Thyroid gland (tissue), 4 donors: ENCODE measurements at regions of chr2 and their contacts with region 1.

Region 1: DNA sequence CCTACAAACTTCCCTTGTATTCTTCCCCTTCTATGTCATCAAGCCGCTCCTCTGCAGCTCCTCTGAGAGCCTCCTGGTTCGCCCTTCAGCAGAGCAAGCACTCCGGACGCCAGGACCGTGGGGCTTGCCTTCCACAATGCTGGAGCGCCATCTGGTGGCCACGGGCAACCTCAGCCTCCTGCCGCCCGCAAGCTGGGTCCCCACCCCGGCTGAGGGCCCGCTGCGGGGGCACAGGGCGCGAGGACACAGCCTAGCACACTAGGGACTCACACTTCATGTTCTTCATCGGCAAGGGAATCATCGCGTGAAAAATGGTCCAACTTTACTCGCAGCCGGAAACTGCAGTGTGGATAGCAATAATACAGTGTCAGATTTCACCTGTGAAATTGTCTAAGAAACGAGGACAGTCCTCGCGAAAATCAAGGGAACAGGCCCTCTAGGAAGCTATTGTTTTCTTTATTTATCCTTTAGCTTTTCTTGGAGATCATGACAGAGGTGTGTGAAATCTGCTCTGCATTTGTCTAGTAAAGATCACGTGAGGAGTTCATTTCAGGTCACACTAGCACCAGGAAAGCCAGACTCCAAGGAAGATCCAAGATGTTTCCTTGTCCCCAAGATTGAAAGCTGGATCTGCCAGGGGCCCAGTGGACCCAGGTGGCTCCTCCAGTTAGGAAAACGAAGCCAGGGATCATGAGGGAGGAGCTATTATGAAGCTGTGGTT is 5.8 kb downstream of the PRLH start:
- DNase-seq: peak; percentile 89 to 94
- H3K4me3 ChIP-seq: no peak overlapping the region
- H3K27ac ChIP-seq: peak overlapping the region in 1 of 3 donors; percentile 54
- H3K4me1 ChIP-seq: peaks cover 5 to 15% of the 10 kb centered on the region in 2 donors
- H3K27me3 ChIP-seq: no peaks in the 10 kb centered on the region
- CTCF ChIP-seq: peak; percentile 94 to 99 (median 98)
- POLR2A ChIP-seq: peak in 1 of 2 donors; percentile 18

Region 2: DNA sequence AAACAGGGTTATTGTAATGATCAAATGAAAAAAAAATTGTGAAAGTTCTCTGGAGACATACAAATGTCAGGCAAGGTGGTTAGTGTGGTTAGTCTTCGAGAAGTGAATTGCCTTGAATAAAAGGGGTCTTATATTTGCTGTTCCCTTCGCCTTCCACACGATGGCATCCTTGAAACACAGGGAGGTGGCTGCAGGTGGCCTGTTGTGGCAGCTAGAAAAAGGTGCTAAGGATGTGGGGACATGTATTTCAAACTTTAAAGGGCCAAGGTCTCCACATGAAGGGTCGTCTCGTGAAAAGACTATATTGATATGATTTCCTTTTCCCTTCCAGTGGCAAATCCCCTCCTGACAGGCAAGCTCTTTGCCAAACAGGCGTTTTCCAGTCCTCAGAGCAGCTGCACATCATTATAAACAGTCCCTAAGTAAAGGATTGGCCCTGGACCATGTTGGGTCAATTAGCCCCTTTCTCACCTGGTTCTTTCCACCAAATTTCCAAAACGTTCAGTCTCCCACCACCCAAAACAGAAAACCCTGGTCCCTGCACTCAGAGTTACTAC is 418.0 kb before region 1 on chr2:
- intact Hi-C with region 1: loop called (anchors 10 kb)
- DNase-seq: peak; percentile 44 to 52
- H3K4me3 ChIP-seq: no peak overlapping the region
- H3K27ac ChIP-seq: no peak overlapping the region
- H3K4me1 ChIP-seq: peaks cover 0 to 7% of the 10 kb centered on the region in 2 donors
- H3K27me3 ChIP-seq: no peaks in the 10 kb centered on the region
- CTCF ChIP-seq: peak in 5 of 6 experiments; percentile 12 to 84 (median 66)
- POLR2A ChIP-seq: no peak

Region 3: DNA sequence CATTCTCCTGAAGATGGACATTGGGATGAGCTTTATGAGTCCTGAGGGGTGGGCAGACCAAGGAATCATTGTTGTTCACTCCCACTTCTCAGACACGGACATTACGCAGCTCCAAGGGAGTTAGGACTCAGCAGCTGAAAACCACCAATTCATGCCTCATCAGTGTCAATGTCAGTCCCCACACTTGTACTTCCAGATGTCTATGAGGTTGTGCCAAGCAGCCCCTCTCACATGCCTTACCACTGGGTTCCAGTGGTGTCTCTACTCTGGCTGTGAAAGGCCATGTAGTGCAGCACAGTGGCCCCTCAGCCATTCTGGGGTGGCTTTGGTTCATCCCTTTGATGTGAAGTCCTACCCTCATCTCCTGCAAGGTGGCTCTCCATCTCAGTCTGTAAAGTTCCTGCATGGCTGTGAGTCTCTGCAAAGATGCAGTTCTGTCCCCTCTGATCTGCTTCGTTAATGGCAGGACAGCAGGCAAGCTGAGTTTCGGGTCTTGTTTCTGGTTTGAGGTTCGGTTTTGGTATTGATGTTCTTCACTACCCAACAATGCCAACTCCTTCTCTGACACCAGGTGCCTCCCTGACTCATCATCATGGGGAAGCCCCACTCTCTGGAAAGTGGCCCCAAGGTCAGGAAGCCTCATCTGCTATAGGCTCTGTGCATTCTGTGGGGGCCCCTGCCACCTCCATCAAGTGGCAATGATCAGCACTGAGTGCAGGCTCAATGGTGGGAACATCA is 144.2 kb before region 1 on chr2:
- intact Hi-C with region 1: loop called (anchors 5 kb)
- DNase-seq: no peak
- H3K4me3 ChIP-seq: no peak overlapping the region
- H3K27ac ChIP-seq: no peak overlapping the region
- H3K4me1 ChIP-seq: peaks cover 9 to 12% of the 10 kb centered on the region in 2 donors
- H3K27me3 ChIP-seq: no peaks in the 10 kb centered on the region
- CTCF ChIP-seq: no peak
- POLR2A ChIP-seq: no peak

Region 4: DNA sequence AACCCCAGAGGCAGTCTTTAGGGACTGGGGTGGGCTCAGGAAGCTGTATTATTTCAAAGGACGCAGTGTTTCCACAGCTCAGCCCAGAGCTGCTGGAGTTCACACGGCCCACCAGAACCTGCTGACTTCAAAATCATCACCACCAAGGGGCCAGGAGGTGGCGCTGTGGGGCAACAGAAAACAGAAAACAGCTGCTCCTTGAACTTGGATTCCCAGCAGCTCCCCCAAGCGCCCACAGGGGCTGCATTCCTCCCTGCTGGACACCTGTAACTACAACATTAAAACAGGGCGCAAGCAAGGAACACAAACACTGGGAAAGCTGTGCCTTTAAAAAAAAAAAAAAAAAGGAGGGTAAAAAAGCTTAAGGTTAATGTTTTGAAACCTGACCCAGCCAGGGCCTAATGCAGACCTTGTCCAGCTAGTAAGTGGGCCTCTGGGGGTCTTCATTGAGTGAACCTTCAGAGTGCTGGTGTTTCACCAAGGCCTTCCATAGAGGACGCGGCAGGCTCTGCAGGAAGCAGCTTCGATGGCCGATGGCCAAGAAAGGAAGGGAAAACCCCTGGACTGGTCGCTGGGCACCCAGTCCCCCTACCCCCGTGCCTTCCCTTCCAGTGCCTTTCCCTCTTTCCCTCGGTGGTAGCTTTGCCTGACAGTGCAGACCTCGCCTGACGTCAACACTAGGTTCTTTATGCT is 59.3 kb before region 1 on chr2:
- intact Hi-C with region 1: loop called (anchors 2 kb)
- DNase-seq: peak; percentile 93 to 94
- H3K4me3 ChIP-seq: no peak overlapping the region
- H3K27ac ChIP-seq: peak overlapping the region in 2 of 3 donors; percentile 4 to 75
- H3K4me1 ChIP-seq: peaks cover 4 to 27% of the 10 kb centered on the region in 2 donors
- H3K27me3 ChIP-seq: no peaks in the 10 kb centered on the region
- CTCF ChIP-seq: peak; percentile 69 to 98 (median 88)
- POLR2A ChIP-seq: no peak

Region 5: GRCh38 chr2:237627441-237628246 is 55.5 kb after region 1 on chr2 and contains the start of gene LRRFIP1:
- intact Hi-C with region 1: loop called (anchors 5 kb)
- DNase-seq: peak; percentile 55 to 59
- H3K4me3 ChIP-seq: peak within 1 kb of the TSS; percentile 22 to 59 (median 28)
- H3K27ac ChIP-seq: peak within 1 kb of the TSS; percentile 38 to 84 (median 71)
- H3K4me1 ChIP-seq: peaks cover 26 to 45% of the 10 kb centered on the region in 2 donors
- H3K27me3 ChIP-seq: no peaks in the 10 kb centered on the region
- CTCF ChIP-seq: peak in 1 of 6 experiments; percentile 15
- POLR2A ChIP-seq: peak; percentile 19 to 64
- total RNA-seq, gene LRRFIP1: 76.1 to 113 (median 96.6) TPM